Breast epithelium (tissue), 4 donors: ENCODE measurements at regions of chr2 and their contacts with region 1.

Region 1: DNA sequence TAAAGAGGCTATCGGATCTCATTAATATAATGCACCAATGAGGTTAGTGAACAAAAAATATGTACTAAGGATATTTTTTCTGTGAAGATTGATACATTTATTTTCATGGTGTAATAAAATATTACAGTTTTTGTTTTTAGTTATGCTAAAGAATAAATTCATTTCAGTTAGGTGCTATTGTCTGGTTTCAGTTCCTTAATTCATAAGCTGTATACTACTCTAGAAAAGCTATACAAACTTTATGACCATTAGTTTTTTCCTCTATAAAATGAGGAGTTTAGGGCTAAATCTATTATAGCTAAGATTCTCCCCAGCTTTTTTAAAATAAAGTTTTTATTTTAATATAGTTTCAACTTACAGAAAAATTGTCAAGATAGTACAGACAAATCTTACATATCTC is 1311.7 kb upstream of the NXPH2 start:
- DNase-seq: no peak
- H3K4me3 ChIP-seq: no peak overlapping the region
- H3K27ac ChIP-seq: no peak overlapping the region
- H3K4me1 ChIP-seq: no peaks in the 10 kb centered on the region
- H3K27me3 ChIP-seq: no peaks in the 10 kb centered on the region
- CTCF ChIP-seq: no peak
- POLR2A ChIP-seq: no peak

Region 2: GRCh38 chr2:139730197-139730596 is 361.7 kb before region 1 on chr2:
- intact Hi-C with region 1: no loop called
- DNase-seq: no peak
- H3K4me3 ChIP-seq: no peak overlapping the region
- H3K27ac ChIP-seq: no peak overlapping the region
- H3K4me1 ChIP-seq: no peaks in the 10 kb centered on the region
- H3K27me3 ChIP-seq: no peaks in the 10 kb centered on the region
- CTCF ChIP-seq: no peak
- POLR2A ChIP-seq: no peak

Region 3: DNA sequence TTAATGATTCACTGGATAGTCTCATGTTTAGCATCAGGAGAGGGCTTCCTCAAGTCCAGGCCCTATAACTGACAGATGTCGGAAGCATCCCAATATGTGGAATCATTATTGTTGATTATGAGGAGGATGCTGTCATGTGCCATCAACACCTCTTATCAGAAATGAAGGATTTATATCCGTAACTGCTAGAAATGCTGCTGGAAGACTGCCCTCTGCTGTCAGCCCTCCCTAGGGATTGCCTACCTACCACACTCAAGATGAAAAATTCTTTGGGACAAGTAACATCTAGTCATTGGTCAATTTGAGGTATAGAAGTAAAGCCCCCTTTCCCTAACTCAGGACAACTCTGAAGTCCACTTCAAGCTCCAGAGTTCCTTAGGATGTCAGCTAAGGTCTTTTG is 145.2 kb before region 1 on chr2:
- intact Hi-C with region 1: loop called (anchors 5 kb)
- DNase-seq: no peak
- H3K4me3 ChIP-seq: no peak overlapping the region
- H3K27ac ChIP-seq: no peak overlapping the region
- H3K4me1 ChIP-seq: no peaks in the 10 kb centered on the region
- H3K27me3 ChIP-seq: no peaks in the 10 kb centered on the region
- CTCF ChIP-seq: no peak
- POLR2A ChIP-seq: no peak